ENCODE measurements at regions of chr18 and their contacts with region 1.

Region 1: GRCh38 chr18:56211473-56211872 is 426.9 kb downstream of the TXNL1 start:
- DNase-seq: no peak
- ATAC-seq: no peak
- H3K4me3 ChIP-seq: no peak overlapping the region
- H3K27ac ChIP-seq: no peak overlapping the region
- H3K4me1 ChIP-seq: peaks cover 0 to 20% (median 5%) of the 10 kb centered on the region in 12 donors
- H3K27me3 ChIP-seq: no peaks in the 10 kb centered on the region
- CTCF ChIP-seq: no peak
- POLR2A ChIP-seq: no peak

Region 2: DNA sequence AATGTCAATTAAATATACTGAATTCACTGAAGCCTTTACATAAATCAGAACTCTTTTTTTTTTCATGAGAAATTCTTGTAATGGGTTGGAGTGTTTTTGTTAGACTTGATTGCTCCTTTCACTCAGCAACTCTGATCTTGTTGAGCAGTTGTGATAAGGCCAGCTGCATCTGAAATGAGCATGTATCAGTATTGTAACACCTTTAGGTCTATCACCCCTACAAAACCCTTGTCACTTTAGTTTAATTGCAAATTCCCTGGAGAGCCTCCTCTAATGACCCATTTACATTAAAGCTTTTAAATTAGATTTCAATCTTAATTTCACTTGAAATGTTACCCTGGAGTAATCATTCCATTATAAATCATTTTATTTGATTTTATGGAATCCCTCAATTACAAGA is 276.7 kb before region 1 on chr18:
- intact Hi-C with region 1: no loop called
- DNase-seq: no peak
- ATAC-seq: no peak
- H3K4me3 ChIP-seq: no peak overlapping the region
- H3K27ac ChIP-seq: no peak overlapping the region
- H3K4me1 ChIP-seq: no peaks in the 10 kb centered on the region
- H3K27me3 ChIP-seq: no peaks in the 10 kb centered on the region
- CTCF ChIP-seq: no peak
- POLR2A ChIP-seq: no peak

Region 3: DNA sequence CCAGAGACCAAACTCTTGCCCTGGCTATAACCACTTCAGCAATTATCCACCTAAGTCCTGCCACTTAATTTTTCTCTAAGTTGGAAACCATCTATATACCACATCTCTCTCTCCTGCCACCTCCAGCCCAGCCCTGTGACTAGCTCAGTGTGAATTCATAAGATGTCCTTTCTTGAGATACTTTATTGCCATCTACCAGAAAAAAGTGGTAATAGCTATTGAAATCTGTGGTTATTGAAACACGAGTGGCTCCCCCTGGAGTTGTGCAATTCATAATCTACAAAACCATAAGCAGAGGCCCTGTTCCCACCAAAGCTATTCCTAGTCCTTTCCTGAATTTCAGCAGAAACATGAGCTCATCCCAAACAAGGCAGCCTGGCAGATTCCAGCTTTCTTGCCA is 102.9 kb after region 1 on chr18:
- intact Hi-C with region 1: loop called in 1 of 10 experiments (anchors 10 kb)
- DNase-seq: no peak
- ATAC-seq: no peak
- H3K4me3 ChIP-seq: no peak overlapping the region
- H3K27ac ChIP-seq: no peak overlapping the region
- H3K4me1 ChIP-seq: peaks cover 0 to 2% (median 0%) of the 10 kb centered on the region in 12 donors
- H3K27me3 ChIP-seq: no peaks in the 10 kb centered on the region
- CTCF ChIP-seq: peak in 1 of 12 donors; percentile 21
- POLR2A ChIP-seq: no peak

Measured in heart left ventricle (tissue), 16 donors.